ENCODE measurements at regions of chr2 and their contacts with region 1.

Region 1: GRCh38 chr2:203730076-203730729 is 23.8 kb downstream of the CD28 start:
- DNase-seq: no peak
- H3K4me3 Mint-ChIP-seq: peak overlapping the region; percentile 47
- H3K27ac Mint-ChIP-seq: peak overlapping the region; percentile 99
- H3K4me1 Mint-ChIP-seq: peaks cover 93% of the 10 kb centered on the region
- H3K27me3 Mint-ChIP-seq: no peaks in the 10 kb centered on the region

Region 2: GRCh38 chr2:203578759-203579643 is 151.2 kb before region 1 on chr2:
- CTCF ChIA-PET with region 1: no interaction called
- POLR2A ChIA-PET with region 1: interaction called, 5 read pairs
- intact Hi-C with region 1: loop called (anchors 2 kb)
- DNase-seq: peak; percentile 72
- H3K4me3 Mint-ChIP-seq: no peak overlapping the region
- H3K27ac Mint-ChIP-seq: peak overlapping the region; percentile 16
- H3K4me1 Mint-ChIP-seq: peaks cover 29% of the 10 kb centered on the region
- H3K27me3 Mint-ChIP-seq: peaks cover 12% of the 10 kb centered on the region

Region 3: DNA sequence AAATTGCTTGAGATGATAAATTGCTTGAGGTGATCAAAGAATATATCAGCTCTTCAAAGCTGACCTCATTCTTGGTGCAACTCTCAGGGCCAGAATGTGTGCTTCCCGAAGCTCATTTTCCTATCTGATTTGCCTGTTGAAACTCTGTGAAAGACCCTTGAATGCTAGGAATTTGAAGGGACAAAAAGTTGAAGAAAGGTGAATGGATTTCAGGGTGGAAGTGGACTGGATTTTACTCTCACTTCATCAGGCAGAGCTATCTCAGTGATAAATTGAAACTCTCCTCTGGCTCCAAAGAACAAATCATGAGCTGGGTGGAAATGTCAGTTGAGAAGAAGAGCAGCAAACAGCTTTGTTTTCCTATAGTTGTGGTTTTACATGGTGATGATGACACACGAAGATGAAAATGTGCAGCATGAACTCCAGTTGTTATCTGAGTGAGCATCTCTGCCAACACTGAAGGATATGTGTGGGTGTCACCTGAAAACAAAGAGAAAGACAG is 10.6 kb after region 1 on chr2:
- CTCF ChIA-PET with region 1: interaction called, 9 read pairs
- POLR2A ChIA-PET with region 1: interaction called, 118 read pairs
- intact Hi-C with region 1: loop called (anchors 1 kb)
- DNase-seq: peak; percentile 65
- H3K4me3 Mint-ChIP-seq: peak overlapping the region; percentile 58
- H3K27ac Mint-ChIP-seq: peak overlapping the region; percentile 99
- H3K4me1 Mint-ChIP-seq: peaks cover 90% of the 10 kb centered on the region
- H3K27me3 Mint-ChIP-seq: no peaks in the 10 kb centered on the region

Region 4: DNA sequence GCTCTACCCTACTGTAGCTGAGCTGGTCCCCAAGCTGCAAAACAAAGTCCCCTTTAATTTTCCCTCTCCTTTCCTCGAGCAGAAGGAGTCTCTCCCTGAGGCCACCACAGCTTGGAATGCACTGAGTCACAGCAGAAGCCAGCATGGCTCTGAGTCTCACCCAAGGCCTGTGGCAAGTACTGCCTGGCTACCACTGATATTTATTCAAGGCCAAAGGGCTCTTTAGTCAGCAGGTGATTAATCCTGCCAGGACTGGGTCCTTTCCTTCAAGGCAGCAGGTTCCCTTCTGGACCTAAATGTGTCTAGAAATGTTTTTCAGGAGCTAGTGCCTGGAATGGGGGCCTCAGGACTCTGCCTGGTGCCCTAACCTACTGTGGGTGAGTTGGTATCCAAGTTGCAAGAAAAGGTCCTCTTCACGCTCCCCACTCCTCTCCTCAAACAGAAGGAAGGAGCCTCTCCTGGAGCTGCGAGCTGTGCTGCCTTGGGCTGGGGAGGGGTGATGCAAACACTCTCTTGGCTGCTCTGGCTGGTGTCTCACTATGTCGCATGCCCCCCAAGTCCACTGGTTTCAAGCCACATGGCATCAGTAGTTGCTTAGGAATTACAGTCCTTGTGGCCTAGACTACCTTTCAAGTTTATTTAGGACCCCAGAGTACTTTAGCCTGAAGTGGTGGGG is 29.6 kb after region 1 on chr2:
- CTCF ChIA-PET with region 1: interaction called, 14 read pairs
- POLR2A ChIA-PET with region 1: interaction called, 11 read pairs
- intact Hi-C with region 1: no loop called
- DNase-seq: no peak
- H3K4me3 Mint-ChIP-seq: no peak overlapping the region
- H3K27ac Mint-ChIP-seq: no peak overlapping the region
- H3K4me1 Mint-ChIP-seq: peaks cover 63% of the 10 kb centered on the region
- H3K27me3 Mint-ChIP-seq: no peaks in the 10 kb centered on the region

Region 5: GRCh38 chr2:203830304-203831055 is 100.3 kb after region 1 on chr2:
- CTCF ChIA-PET with region 1: no interaction called
- POLR2A ChIA-PET with region 1: no interaction called
- intact Hi-C with region 1: loop called (anchors 1 kb)
- DNase-seq: peak; percentile 90
- H3K4me3 Mint-ChIP-seq: peak overlapping the region; percentile 58
- H3K27ac Mint-ChIP-seq: peak overlapping the region; percentile 98
- H3K4me1 Mint-ChIP-seq: peaks cover 34% of the 10 kb centered on the region
- H3K27me3 Mint-ChIP-seq: no peaks in the 10 kb centered on the region

Region 6: DNA sequence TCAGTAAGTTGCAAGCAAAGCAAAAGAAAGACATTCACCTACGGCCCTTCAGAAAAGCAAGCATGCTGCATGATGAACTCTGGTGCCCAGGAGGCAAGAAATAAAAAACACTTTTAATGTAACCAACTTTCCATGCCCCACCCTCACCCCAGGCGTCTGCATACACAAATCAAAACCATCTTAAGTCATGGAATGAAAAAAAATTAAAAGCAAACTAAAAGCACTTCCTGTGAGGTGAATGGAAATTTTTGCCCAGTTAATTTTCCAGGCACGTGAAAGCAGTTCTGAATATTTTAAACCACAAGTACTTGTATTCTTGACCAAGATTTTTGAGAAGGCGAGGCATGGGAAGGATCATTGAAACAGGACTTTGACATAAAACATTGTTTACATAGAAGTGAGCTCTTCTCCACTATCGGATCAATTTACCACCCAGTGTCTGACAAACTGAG is 203.9 kb after region 1 on chr2:
- CTCF ChIA-PET with region 1: no interaction called
- POLR2A ChIA-PET with region 1: interaction called, 4 read pairs
- intact Hi-C with region 1: loop called (anchors 2 kb)
- DNase-seq: peak; percentile 76
- H3K4me3 Mint-ChIP-seq: peak overlapping the region; percentile 74
- H3K27ac Mint-ChIP-seq: peak overlapping the region; percentile 94
- H3K4me1 Mint-ChIP-seq: peaks cover 59% of the 10 kb centered on the region
- H3K27me3 Mint-ChIP-seq: no peaks in the 10 kb centered on the region

Region 7: DNA sequence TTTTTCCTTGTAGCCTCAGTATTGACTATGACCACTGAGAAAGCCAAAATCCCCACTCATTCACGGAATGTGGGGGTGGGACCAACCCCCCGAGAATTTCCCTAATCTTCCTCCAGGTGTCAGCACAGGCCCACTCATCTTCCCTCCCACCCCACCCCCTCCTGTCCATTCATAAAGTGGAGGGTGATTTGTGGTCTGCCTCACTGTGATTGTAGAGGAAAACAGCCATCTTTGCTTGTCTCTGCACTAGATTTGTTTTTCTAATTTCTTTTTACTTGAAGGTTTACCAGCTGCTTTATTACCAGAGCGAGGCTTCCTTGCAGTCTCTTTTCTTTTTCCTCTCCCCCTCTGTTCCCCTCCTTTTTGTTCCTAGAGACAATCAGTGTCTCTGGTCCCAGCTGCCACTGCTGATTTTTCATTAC is 378.1 kb after region 1 on chr2:
- CTCF ChIA-PET with region 1: no interaction called
- POLR2A ChIA-PET with region 1: no interaction called
- intact Hi-C with region 1: loop called (anchors 10 kb)
- DNase-seq: peak; percentile 78
- H3K4me3 Mint-ChIP-seq: peak overlapping the region; percentile 55
- H3K27ac Mint-ChIP-seq: peak overlapping the region; percentile 90
- H3K4me1 Mint-ChIP-seq: peaks cover 71% of the 10 kb centered on the region
- H3K27me3 Mint-ChIP-seq: peaks cover 4% of the 10 kb centered on the region

Measured in activated CD4-positive, alpha-beta memory T cell treated with anti-CD3 and anti-CD28 coated beads for 36 hours (primary cell).